PC-3 (cell line): ENCODE measurements at regions of chrX and their contacts with region 1.

Region 1: DNA sequence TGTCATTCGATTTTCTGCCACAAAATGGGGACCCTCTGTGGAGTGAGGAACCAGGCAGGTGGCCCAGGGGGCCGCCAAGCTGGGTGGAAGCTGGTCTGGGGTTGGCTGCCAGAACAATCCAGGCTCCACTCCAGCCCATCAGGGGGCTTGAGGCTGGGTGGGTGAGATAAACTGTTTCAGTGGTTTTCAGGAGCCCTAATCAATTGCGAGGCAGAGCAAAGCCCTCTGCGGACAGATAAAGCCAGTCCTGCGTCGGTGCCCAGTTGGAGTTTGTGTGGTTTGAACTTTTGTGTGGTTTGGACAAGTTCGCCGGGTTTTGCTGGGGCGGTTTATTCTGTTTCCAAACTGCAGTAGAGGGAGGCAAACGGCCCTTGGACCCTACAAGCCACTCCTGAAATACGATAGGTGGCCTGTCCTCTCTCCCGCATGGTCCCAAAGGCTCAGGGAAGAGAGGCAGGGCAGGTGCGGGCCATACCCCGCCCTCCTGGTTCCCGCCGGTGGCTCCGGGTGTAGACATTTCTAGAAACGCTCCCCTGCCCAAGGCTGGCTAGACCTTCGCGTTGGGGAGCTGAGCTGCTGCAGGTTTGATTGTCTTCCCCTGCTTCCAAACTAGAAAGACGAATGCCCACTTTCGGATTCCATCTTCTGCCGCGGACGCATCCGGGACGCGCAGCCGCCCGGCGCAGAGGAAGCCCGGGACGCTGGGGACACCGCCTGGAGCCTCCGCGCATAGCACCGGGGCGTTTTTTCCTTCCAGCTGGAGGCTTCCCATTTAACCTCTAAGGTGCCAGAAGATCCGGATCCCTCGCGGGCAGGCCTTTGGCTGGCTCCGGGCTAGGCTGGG is 169.0 kb upstream of the BCOR start:
- DNase-seq: peak; percentile 71
- ATAC-seq: peak; percentile 92
- H3K4me3 ChIP-seq: peak overlapping the region; percentile 79
- H3K27ac ChIP-seq: no peak overlapping the region
- H3K4me1 ChIP-seq: peaks cover 14% of the 10 kb centered on the region; the same call in 1 of the 2 replicates
- H3K27me3 ChIP-seq: no peaks in the 10 kb centered on the region
- CTCF ChIP-seq: peak; percentile 71

Region 2: GRCh38 chrX:39652336-39653131 is 614.2 kb before region 1 on chrX:
- CTCF ChIA-PET with region 1: no interaction called
- POLR2A ChIA-PET with region 1: no interaction called
- intact Hi-C with region 1: loop called (anchors 2 kb)
- DNase-seq: peak; percentile 58
- ATAC-seq: peak; percentile 55; the same call in 1 of the 2 replicates
- H3K4me3 ChIP-seq: no peak overlapping the region
- H3K27ac ChIP-seq: no peak overlapping the region
- H3K4me1 ChIP-seq: no peaks in the 10 kb centered on the region
- H3K27me3 ChIP-seq: peaks cover 22% of the 10 kb centered on the region
- CTCF ChIP-seq: peak; percentile 72

Region 3: GRCh38 chrX:40108959-40109287 is 157.8 kb before region 1 on chrX:
- CTCF ChIA-PET with region 1: no interaction called
- POLR2A ChIA-PET with region 1: no interaction called
- intact Hi-C with region 1: loop called (anchors 5 kb)
- DNase-seq: peak; percentile 79
- ATAC-seq: peak; percentile 32
- H3K4me3 ChIP-seq: peak overlapping the region; percentile 76
- H3K27ac ChIP-seq: peak overlapping the region; percentile 44
- H3K4me1 ChIP-seq: peaks cover 32% of the 10 kb centered on the region
- H3K27me3 ChIP-seq: no peaks in the 10 kb centered on the region
- CTCF ChIP-seq: no peak

Region 4: DNA sequence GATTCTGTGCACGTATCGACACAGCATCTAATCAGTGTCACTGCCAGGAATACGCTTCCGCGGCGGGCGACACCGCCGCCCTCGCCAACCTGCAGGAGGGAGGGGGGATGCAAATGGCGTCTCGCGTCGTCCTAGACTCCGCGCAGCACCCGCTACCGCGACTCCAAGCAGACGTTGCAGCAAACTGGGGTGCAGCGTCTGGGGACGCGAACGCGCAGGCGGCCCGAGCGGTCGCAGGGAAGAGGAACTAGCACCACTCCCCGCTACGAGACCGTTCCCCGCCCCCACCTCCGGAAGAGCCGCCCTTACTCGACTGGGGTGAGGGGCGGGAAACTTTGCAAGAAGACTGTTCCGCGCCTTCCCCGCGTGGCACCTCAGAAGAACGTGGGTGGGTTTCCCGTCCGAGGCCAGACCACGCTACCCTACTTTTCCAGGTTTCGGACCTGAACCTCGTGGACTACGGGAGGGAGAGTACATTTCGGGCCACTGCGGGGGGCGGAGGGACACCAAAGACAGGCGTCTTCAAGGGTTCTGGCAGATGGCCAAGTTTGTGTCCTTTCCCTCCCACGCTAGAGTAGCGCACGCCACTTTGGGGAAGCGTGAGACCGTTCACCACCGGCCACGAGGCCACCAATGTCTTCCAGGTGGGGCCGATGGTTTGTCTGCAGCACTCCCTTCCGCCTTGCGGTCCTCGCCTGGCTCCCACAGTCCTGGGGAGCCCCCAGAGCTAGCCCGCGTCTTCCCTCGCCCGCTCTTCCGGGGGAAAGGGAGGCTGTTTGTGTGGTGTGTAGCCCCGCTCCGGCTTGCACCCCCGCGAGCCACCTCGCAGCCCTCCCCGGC is 91.0 kb before region 1 on chrX:
- CTCF ChIA-PET with region 1: interaction called, 5 read pairs
- POLR2A ChIA-PET with region 1: no interaction called
- intact Hi-C with region 1: loop called (anchors 5 kb)
- DNase-seq: peak; percentile 48
- ATAC-seq: peak; percentile 16
- H3K4me3 ChIP-seq: peak overlapping the region; percentile 69
- H3K27ac ChIP-seq: peak overlapping the region; percentile 55
- H3K4me1 ChIP-seq: peaks cover 45% of the 10 kb centered on the region
- H3K27me3 ChIP-seq: no peaks in the 10 kb centered on the region
- CTCF ChIP-seq: no peak

Region 5: DNA sequence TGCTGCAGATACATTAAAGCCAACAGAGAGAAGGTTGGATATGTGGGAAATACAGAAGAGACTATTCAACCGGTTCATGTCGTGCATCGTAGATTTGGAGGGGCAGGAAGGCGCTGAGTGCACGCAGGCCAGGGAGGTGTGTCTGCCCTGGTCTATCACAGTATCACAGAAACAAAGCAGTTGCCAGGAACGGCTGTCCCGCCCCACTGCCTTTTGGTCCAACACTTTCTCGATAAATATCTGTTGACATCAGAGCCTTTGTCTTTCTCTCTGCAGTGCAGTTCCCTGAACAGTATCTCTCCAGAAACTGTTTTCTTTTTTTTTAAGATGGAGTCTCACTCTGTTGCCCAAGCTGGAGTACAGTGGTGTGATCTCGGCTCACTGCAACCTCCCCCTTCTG is 17.9 kb before region 1 on chrX:
- CTCF ChIA-PET with region 1: no interaction called
- POLR2A ChIA-PET with region 1: no interaction called
- intact Hi-C with region 1: no loop called
- DNase-seq: no peak
- ATAC-seq: no peak
- H3K4me3 ChIP-seq: no peak overlapping the region
- H3K27ac ChIP-seq: no peak overlapping the region
- H3K4me1 ChIP-seq: no peaks in the 10 kb centered on the region
- H3K27me3 ChIP-seq: no peaks in the 10 kb centered on the region
- CTCF ChIP-seq: no peak